ENCODE measurements at regions of chr22 and their contacts with region 1.

Region 1: GRCh38 chr22:23178512-23179254 is 1.6 kb upstream of the BCR start:
- DNase-seq: peak; percentile 82
- H3K4me3 Mint-ChIP-seq: peak overlapping the region; percentile 74
- H3K27ac Mint-ChIP-seq: peak overlapping the region; percentile 77
- H3K4me1 Mint-ChIP-seq: peaks cover 57% of the 10 kb centered on the region
- H3K27me3 Mint-ChIP-seq: no peaks in the 10 kb centered on the region
- CTCF ChIP-seq: peak; percentile 97

Region 2: GRCh38 chr22:23219822-23220484 is 41.3 kb after region 1 on chr22:
- CTCF ChIA-PET with region 1: no interaction called
- intact Hi-C with region 1: loop called (anchors 2 kb)
- DNase-seq: peak; percentile 64
- H3K4me3 Mint-ChIP-seq: peak overlapping the region; percentile 34
- H3K27ac Mint-ChIP-seq: peak overlapping the region; percentile 24
- H3K4me1 Mint-ChIP-seq: peaks cover 83% of the 10 kb centered on the region
- H3K27me3 Mint-ChIP-seq: no peaks in the 10 kb centered on the region
- CTCF ChIP-seq: no peak

Region 3: DNA sequence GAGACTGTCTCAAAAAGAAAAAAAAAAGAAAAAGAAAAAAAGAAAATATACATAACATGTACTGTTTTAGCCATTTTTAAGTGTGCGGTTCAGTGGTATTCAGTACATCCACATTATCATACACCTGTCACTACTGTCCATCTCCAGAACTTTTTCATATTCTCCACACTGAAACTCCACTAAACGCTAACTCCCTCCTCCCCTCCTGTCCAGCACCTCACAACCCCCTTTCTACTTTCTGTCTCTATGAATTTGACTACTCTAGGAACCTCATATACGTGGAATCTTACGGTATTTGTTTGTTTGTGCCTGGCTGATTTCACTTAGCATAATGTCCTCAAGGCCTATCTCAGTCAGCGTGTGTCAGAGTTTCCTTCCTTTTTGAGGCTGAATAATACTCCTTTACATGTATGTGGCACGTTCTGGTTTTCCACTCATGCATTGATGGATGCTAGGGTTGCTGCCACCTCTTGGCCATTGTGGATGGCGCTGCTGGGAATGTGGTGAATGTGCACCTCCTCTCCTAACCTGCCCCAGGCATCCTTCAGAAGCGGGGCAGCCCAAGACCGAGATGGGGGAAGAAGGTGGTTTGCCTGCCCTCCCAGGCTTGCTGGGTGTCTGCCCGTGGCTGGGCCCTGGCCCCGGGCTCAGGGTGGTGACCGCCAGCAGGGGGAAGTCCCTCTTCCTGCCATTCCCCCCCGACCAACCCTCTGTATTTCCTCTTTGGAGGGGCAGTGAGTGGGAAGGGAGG is 62.1 kb after region 1 on chr22:
- CTCF ChIA-PET with region 1: interaction called, 4 read pairs
- intact Hi-C with region 1: loop called (anchors 10 kb)
- DNase-seq: peak; percentile 24
- H3K4me3 Mint-ChIP-seq: no peak overlapping the region
- H3K27ac Mint-ChIP-seq: no peak overlapping the region
- H3K4me1 Mint-ChIP-seq: peaks cover 41% of the 10 kb centered on the region
- H3K27me3 Mint-ChIP-seq: no peaks in the 10 kb centered on the region
- CTCF ChIP-seq: no peak

Region 4: DNA sequence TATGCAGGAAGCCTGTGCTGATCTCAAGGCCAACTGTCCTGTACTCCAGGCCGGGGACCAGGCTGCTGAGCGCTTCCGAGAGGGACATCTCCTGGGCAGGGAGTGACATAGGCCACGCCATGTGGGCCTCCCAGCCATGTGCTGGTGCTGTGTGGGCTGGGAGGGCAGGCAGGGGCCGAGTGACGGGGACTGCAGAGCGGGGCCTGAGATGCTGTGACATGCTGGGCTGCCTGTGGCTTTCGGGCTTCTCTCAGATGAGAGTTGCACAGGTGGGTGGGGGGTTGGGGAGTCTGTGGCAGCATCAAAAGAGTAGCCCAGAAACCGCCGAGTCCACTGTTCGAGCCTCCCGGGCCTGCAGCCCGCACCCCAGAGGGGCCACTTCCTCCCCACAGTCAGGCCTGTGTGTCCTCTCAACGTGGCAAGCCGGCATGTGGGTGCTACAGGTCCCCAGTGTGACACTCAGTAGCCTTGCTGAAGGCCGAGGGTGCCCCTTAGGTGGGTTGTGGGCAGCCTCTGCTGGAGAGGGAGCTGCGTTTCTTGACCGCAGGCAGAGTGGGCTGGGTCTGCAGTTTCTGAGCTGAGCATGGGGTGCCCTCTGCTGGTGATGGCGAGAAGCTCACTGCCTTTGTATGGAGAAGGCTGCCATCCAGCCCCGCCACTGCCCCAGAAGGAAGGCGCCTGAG is 102.9 kb after region 1 on chr22:
- CTCF ChIA-PET with region 1: interaction called, 109 read pairs
- intact Hi-C with region 1: loop called (anchors 1 kb)
- DNase-seq: peak; percentile 93
- H3K4me3 Mint-ChIP-seq: peak overlapping the region; percentile 48
- H3K27ac Mint-ChIP-seq: peak overlapping the region; percentile 92
- H3K4me1 Mint-ChIP-seq: peaks cover 38% of the 10 kb centered on the region
- H3K27me3 Mint-ChIP-seq: no peaks in the 10 kb centered on the region
- CTCF ChIP-seq: peak; percentile 93

Region 5: DNA sequence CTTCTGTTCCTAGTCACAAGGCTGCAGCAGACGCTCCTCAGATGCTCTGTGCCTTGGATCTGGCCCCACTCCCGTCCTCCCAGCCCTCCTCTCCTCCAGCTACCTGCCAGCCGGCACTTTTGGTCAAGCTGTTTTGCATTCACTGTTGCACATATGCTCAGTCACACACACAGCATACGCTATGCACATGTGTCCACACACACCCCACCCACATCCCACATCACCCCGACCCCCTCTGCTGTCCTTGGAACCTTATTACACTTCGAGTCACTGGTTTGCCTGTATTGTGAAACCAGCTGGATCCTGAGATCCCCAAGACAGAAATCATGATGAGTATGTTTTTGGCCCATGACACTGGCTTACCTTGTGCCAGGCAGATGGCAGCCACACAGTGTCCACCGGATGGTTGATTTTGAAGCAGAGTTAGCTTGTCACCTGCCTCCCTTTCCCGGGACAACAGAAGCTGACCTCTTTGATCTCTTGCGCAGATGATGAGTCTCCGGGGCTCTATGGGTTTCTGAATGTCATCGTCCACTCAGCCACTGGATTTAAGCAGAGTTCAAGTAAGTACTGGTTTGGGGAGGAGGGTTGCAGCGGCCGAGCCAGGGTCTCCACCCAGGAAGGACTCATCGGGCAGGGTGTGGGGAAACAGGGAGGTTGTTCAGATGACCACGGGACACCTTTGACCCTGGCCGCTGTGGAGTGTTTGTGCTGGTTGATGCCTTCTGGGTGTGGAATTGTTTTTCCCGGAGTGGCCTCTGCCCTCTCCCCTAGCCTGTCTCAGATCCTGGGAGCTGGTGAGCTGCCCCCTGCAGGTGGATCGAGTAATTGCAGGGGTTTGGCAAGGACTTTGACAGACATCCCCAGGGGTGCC is 111.4 kb after region 1 on chr22:
- CTCF ChIA-PET with region 1: interaction called, 12 read pairs
- intact Hi-C with region 1: no loop called
- DNase-seq: peak; percentile 63
- H3K4me3 Mint-ChIP-seq: no peak overlapping the region
- H3K27ac Mint-ChIP-seq: no peak overlapping the region
- H3K4me1 Mint-ChIP-seq: no peaks in the 10 kb centered on the region
- H3K27me3 Mint-ChIP-seq: no peaks in the 10 kb centered on the region
- CTCF ChIP-seq: peak; percentile 95